Body of pancreas (tissue), 4 donors: ENCODE measurements at regions of chr11 and their contacts with region 1.

Region 1: GRCh38 chr11:122863704-122864326 is 18.7 kb upstream of the JHY start:
- DNase-seq: peak; percentile 33 to 62 (median 52)
- ATAC-seq: peak; percentile 45
- H3K4me3 ChIP-seq: no peak overlapping the region
- H3K27ac ChIP-seq: no peak overlapping the region
- H3K4me1 ChIP-seq: no peaks in the 10 kb centered on the region
- H3K27me3 ChIP-seq: no peaks in the 10 kb centered on the region
- CTCF ChIP-seq: peak; percentile 56 to 81 (median 74)
- POLR2A ChIP-seq: no peak

Region 2: DNA sequence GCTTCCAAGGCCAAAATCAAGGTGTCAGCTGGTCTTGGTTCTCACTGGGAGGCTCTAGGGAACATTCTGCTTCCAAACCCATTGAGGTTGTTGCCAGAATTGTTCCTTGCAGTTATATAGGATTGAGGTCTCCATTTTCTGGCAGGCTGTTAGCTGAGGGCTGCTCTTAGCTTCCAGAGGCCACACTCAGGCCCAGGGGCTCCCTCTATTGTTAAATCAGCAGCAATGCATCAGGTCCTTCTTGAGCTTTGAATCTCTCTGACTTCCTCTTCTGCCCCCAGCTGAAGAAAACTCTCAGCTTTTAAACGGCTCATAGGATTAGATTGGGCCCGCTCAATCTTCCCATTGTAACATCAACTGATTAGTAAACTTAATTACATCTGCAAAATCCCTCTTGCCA is 157.2 kb after region 1 on chr11:
- intact Hi-C with region 1: loop called (anchors 10 kb)
- DNase-seq: peak in 2 of 4 donors; percentile 9 to 16
- ATAC-seq: no peak
- H3K4me3 ChIP-seq: no peak overlapping the region
- H3K27ac ChIP-seq: no peak overlapping the region
- H3K4me1 ChIP-seq: peaks cover 3% of the 10 kb centered on the region
- H3K27me3 ChIP-seq: no peaks in the 10 kb centered on the region
- CTCF ChIP-seq: peak in 3 of 7 experiments; percentile 10 to 27 (median 17)
- POLR2A ChIP-seq: no peak